Ascending aorta (tissue), 2 donors: ENCODE measurements at regions of chr6 and their contacts with region 1.

Region 1: DNA sequence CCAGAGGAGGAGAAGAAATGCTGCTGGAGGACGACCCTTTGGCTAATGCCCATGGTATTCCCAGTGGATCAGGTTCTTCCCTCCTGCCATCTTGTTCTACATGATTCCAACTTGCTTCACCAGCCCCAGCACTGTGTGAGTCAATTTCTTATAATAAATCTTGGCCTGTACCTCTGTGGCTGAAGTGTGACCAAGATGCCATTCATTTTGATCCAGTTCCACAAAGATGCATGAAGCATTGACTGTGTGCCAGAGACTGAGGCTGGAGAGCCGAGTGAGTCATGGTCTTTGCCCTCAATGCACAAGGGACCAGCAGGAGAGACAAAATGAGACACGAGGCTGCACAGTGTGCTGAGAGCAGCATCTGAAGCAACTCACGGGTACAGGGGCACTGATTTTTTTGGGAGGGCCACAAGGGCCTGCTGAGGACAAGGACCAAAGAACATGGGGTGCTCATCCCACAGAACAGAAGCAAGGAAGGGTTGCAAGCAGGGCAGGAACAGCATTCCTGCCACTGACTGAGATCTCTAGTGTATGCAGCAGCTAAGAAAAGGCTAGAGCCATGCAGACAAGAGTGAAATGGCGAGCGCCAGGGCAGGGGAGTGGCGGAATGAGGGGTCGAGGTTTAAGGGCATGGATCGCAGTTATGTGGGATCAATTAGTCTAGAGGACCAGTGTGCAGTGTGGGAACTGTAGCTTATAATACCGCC is 207.0 kb downstream of the THBS2 start:
- DNase-seq: peak; percentile 36 to 88
- H3K4me3 ChIP-seq: no peak overlapping the region
- H3K27ac ChIP-seq: peak overlapping the region; percentile 64 to 83
- H3K4me1 ChIP-seq: peaks cover 6 to 14% of the 10 kb centered on the region in 2 donors
- H3K27me3 ChIP-seq: no peaks in the 10 kb centered on the region
- CTCF ChIP-seq: no peak

Region 2: DNA sequence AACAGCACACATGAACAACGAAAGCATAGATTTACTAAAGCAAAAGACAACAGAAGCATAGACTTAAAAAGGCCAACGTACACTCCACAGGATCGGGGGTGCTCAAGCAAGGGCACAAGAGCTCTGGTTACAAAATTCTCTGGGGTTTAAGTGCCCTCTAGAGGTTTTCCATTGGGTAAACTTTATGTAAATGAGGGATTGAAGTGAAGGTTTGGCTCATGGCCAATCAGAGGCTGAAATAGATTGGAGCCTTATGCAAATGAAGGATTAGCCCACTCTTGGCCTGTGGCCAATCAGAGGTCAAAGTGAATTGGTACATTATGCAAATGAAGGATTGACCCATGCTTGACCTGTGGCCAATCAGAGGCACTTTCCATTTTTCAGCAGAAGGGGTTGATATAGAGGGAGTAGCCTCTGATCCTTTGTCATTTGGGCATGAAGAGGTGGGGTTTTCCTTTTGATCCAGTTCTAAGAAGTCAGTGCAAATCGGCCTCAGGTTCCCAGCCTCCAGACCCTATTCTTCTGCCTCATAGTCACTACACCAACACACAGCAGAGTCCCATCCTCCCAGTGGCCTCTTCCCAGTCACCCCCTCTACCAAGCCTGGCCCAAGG is 37.9 kb before region 1 on chr6:
- intact Hi-C with region 1: loop called (anchors 2 kb)
- DNase-seq: no peak
- H3K4me3 ChIP-seq: no peak overlapping the region
- H3K27ac ChIP-seq: no peak overlapping the region
- H3K4me1 ChIP-seq: peaks cover 0 to 18% of the 10 kb centered on the region in 2 donors
- H3K27me3 ChIP-seq: no peaks in the 10 kb centered on the region
- CTCF ChIP-seq: no peak

Region 3: DNA sequence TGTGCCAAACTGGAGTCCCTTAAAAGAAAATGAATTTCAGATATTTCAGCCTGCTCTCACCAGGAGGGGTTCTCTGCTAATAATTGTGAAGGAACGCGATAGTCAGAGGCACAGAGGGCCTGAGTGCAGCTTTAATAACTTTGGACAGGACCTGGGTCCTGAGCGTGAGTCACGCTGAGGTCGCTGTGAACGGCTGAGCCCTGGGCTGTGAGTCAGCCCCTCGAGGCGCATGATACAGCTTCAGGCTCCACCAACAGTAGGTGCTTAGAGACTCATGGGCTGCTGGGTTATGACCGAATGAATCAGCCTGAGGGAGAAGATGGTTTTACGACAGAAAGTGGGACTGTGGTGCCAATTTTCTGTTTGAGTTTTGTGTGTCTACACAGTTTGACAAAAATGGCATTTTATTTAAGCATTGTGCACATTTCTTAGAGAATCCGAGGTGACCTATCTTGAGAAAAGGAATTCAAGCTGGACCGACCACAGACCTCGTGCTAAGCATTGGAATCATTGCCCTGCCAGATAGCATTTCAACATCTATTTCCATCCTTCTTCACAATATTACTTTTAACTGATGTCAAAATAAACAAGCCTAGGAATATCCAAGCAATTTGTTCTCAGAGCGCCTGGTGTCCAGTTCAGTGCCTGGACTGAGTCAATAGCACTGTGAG is 24.0 kb after region 1 on chr6:
- intact Hi-C with region 1: loop called (anchors 1 kb)
- DNase-seq: peak; percentile 91 to 97
- H3K4me3 ChIP-seq: no peak overlapping the region
- H3K27ac ChIP-seq: peak overlapping the region; percentile 71 to 72
- H3K4me1 ChIP-seq: peaks cover 0 to 41% of the 10 kb centered on the region in 2 donors
- H3K27me3 ChIP-seq: no peaks in the 10 kb centered on the region
- CTCF ChIP-seq: no peak

Region 4: GRCh38 chr6:169162752-169163591 is 116.3 kb after region 1 on chr6:
- intact Hi-C with region 1: loop called (anchors 1 kb)
- DNase-seq: peak; percentile 65 to 94
- H3K4me3 ChIP-seq: peak overlapping the region; percentile 1 to 4
- H3K27ac ChIP-seq: peak overlapping the region; percentile 84 to 87
- H3K4me1 ChIP-seq: peaks cover 15 to 46% of the 10 kb centered on the region in 2 donors
- H3K27me3 ChIP-seq: no peaks in the 10 kb centered on the region
- CTCF ChIP-seq: no peak

Region 5: GRCh38 chr6:169172446-169172845 is 125.8 kb after region 1 on chr6:
- intact Hi-C with region 1: loop called (anchors 2 kb)
- DNase-seq: peak; percentile 84 to 97
- H3K4me3 ChIP-seq: no peak overlapping the region
- H3K27ac ChIP-seq: peak overlapping the region; percentile 87 to 95
- H3K4me1 ChIP-seq: peaks cover 12 to 55% of the 10 kb centered on the region in 2 donors
- H3K27me3 ChIP-seq: no peaks in the 10 kb centered on the region
- CTCF ChIP-seq: no peak

Region 6: GRCh38 chr6:169190144-169190584 is 143.5 kb after region 1 on chr6:
- intact Hi-C with region 1: loop called (anchors 2 kb)
- DNase-seq: peak; percentile 55 to 95
- H3K4me3 ChIP-seq: no peak overlapping the region
- H3K27ac ChIP-seq: peak overlapping the region; percentile 81 to 87
- H3K4me1 ChIP-seq: peaks cover 10 to 39% of the 10 kb centered on the region in 2 donors
- H3K27me3 ChIP-seq: no peaks in the 10 kb centered on the region
- CTCF ChIP-seq: no peak

Region 7: DNA sequence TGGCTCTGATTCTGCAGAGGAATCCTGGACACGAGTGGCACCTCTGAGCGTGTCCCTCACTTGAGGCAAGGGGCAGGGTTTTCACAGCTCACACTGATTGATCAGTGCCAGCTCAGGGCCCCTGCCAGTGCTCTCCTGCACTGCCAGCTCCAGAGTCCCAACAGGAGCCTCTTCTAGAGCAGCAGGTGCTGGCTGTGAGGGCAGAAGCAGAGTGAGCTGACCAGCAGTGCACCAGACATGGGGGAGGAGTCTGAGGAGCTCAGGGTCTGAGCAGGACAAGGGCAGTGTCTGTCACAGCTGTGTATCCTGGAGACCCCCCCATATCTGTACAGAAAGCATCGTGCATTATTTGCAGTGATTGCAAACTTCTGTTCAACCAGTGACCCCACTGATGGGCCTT is 238.5 kb after region 1 on chr6:
- intact Hi-C with region 1: no loop called
- DNase-seq: no peak
- H3K4me3 ChIP-seq: no peak overlapping the region
- H3K27ac ChIP-seq: no peak overlapping the region
- H3K4me1 ChIP-seq: no peaks in the 10 kb centered on the region
- H3K27me3 ChIP-seq: no peaks in the 10 kb centered on the region
- CTCF ChIP-seq: no peak

Region 8: GRCh38 chr6:169380493-169380892 is 333.9 kb after region 1 on chr6:
- intact Hi-C with region 1: no loop called
- DNase-seq: no peak
- H3K4me3 ChIP-seq: no peak overlapping the region
- H3K27ac ChIP-seq: no peak overlapping the region
- H3K4me1 ChIP-seq: no peaks in the 10 kb centered on the region
- H3K27me3 ChIP-seq: no peaks in the 10 kb centered on the region
- CTCF ChIP-seq: no peak